Caco-2 (cell line): ENCODE measurements at regions of chr12 and their contacts with region 1.

Region 1: GRCh38 chr12:123867141-123867540 is 105.0 kb downstream of the DNAH10 start:
- DNase-seq: peak; percentile 73 to 84
- H3K4me3 ChIP-seq: no peak overlapping the region
- H3K4me3 Mint-ChIP-seq: peak overlapping the region; percentile 30
- H3K27ac Mint-ChIP-seq: peak overlapping the region; percentile 41
- H3K4me1 ChIP-seq: peaks cover 20% of the 10 kb centered on the region
- H3K4me1 Mint-ChIP-seq: peaks cover 33% of the 10 kb centered on the region
- H3K27me3 ChIP-seq: no peaks in the 10 kb centered on the region
- H3K27me3 Mint-ChIP-seq: no peaks in the 10 kb centered on the region
- CTCF ChIP-seq: no peak

Region 2: GRCh38 chr12:123886931-123887615 is 19.9 kb after region 1 on chr12:
- CTCF ChIA-PET with region 1: no interaction called
- POLR2A ChIA-PET with region 1: no interaction called
- intact Hi-C with region 1: no loop called
- DNase-seq: no peak
- H3K4me3 ChIP-seq: no peak overlapping the region
- H3K4me3 Mint-ChIP-seq: peak overlapping the region; percentile 22
- H3K27ac Mint-ChIP-seq: no peak overlapping the region
- H3K4me1 ChIP-seq: no peaks in the 10 kb centered on the region
- H3K4me1 Mint-ChIP-seq: no peaks in the 10 kb centered on the region
- H3K27me3 ChIP-seq: no peaks in the 10 kb centered on the region
- H3K27me3 Mint-ChIP-seq: no peaks in the 10 kb centered on the region
- CTCF ChIP-seq: no peak

Region 3: GRCh38 chr12:123972457-123973401 is 105.6 kb after region 1 on chr12 and contains the starts of genes CCDC92 and ZNF664:
- CTCF ChIA-PET with region 1: no interaction called
- POLR2A ChIA-PET with region 1: no interaction called
- intact Hi-C with region 1: loop called (anchors 2 kb)
- DNase-seq: peak; percentile 96 to 99
- H3K4me3 ChIP-seq: peak within 1 kb of the TSS; percentile 91
- H3K4me3 Mint-ChIP-seq: peak within 1 kb of the TSS; percentile 96
- H3K27ac Mint-ChIP-seq: peak within 1 kb of the TSS; percentile 92
- H3K4me1 ChIP-seq: peaks cover 8% of the 10 kb centered on the region; the same call in 1 of the 2 replicates
- H3K4me1 Mint-ChIP-seq: peaks cover 15% of the 10 kb centered on the region
- H3K27me3 ChIP-seq: no peaks in the 10 kb centered on the region
- H3K27me3 Mint-ChIP-seq: no peaks in the 10 kb centered on the region
- CTCF ChIP-seq: peak in 1 of 2 experiments; percentile 31
- total RNA-seq, gene CCDC92: 14.7 and 16.8 TPM in 2 replicates
- total RNA-seq, gene ZNF664: 117 and 122 TPM in 2 replicates